Activated CD4-positive, alpha-beta T cell treated with anti-CD3 and anti-CD28 coated beads for 36 hours (primary cell): ENCODE measurements at regions of chr15 and their contacts with region 1.

Region 1: DNA sequence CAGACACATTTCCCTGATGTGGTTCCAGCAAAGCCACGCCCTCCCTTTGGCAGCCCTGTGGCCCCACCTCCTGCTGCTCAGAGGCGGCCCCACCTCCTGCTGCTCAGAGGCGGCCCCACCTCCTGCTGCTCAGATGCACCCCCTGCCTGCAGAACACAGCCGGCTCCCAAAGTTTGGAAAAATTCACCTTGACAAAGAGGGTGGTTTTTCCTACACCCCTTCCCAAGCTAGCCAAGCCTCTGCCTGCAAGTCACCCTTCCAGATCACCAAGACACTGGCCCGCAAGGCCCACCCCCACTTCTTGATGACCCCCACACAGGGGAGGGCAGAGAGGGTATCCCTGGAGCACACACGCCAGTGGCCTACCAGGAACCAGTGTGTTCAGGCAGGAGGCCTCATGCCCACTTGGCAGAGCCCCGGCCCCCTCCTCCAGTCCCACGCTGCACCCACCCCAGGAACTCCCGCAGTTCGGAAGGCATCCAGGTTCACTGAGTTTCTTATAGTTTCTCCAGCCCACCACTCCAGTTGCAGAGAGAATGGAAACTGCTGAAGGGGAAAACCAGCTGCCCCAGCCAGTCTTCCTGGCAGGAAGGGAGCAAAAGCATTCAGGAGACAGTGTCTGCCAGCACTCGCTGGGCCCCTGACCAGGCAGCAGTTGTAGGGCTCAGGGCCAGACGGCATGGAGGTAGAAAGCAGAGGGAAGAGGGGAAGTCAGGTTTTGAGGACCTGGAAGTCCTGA is 2.3 kb upstream of the HAPLN3 start:
- DNase-seq: peak; percentile 86
- ATAC-seq: peak; percentile 80
- H3K4me3 Mint-ChIP-seq: no peak overlapping the region
- H3K27ac Mint-ChIP-seq: no peak overlapping the region
- H3K4me1 Mint-ChIP-seq: peaks cover 35% of the 10 kb centered on the region
- H3K27me3 Mint-ChIP-seq: no peaks in the 10 kb centered on the region

Region 2: GRCh38 chr15:88476635-88477060 is 421.0 kb before region 1 on chr15:
- CTCF ChIA-PET with region 1: no interaction called
- POLR2A ChIA-PET with region 1: no interaction called
- intact Hi-C with region 1: loop called in 1 of 2 experiments (anchors 10 kb)
- DNase-seq: peak; percentile 28
- ATAC-seq: peak; percentile 60
- H3K4me3 Mint-ChIP-seq: no peak overlapping the region
- H3K27ac Mint-ChIP-seq: no peak overlapping the region
- H3K4me1 Mint-ChIP-seq: peaks cover 9% of the 10 kb centered on the region
- H3K27me3 Mint-ChIP-seq: no peaks in the 10 kb centered on the region

Region 3: GRCh38 chr15:88913017-88913849 is 15.6 kb after region 1 on chr15 and contains the start of gene MFGE8:
- CTCF ChIA-PET with region 1: interaction called, 3 read pairs
- POLR2A ChIA-PET with region 1: no interaction called
- intact Hi-C with region 1: loop called (anchors 1 to 2 kb)
- DNase-seq: peak; percentile 83
- ATAC-seq: peak; percentile 95
- H3K4me3 Mint-ChIP-seq: peak within 1 kb of the TSS; percentile 79
- H3K27ac Mint-ChIP-seq: peak within 1 kb of the TSS; percentile 82
- H3K4me1 Mint-ChIP-seq: peaks cover 16% of the 10 kb centered on the region
- H3K27me3 Mint-ChIP-seq: no peaks in the 10 kb centered on the region
- total RNA-seq, gene MFGE8: 17.0 to 18.6 TPM

Region 4: GRCh38 chr15:89129123-89129815 is 231.6 kb after region 1 on chr15:
- CTCF ChIA-PET with region 1: no interaction called
- POLR2A ChIA-PET with region 1: no interaction called
- intact Hi-C with region 1: loop called in 1 of 2 experiments (anchors 5 kb)
- DNase-seq: peak; percentile 75
- ATAC-seq: peak; percentile 25
- H3K4me3 Mint-ChIP-seq: no peak overlapping the region
- H3K27ac Mint-ChIP-seq: no peak overlapping the region
- H3K4me1 Mint-ChIP-seq: peaks cover 28% of the 10 kb centered on the region
- H3K27me3 Mint-ChIP-seq: no peaks in the 10 kb centered on the region

Region 5: DNA sequence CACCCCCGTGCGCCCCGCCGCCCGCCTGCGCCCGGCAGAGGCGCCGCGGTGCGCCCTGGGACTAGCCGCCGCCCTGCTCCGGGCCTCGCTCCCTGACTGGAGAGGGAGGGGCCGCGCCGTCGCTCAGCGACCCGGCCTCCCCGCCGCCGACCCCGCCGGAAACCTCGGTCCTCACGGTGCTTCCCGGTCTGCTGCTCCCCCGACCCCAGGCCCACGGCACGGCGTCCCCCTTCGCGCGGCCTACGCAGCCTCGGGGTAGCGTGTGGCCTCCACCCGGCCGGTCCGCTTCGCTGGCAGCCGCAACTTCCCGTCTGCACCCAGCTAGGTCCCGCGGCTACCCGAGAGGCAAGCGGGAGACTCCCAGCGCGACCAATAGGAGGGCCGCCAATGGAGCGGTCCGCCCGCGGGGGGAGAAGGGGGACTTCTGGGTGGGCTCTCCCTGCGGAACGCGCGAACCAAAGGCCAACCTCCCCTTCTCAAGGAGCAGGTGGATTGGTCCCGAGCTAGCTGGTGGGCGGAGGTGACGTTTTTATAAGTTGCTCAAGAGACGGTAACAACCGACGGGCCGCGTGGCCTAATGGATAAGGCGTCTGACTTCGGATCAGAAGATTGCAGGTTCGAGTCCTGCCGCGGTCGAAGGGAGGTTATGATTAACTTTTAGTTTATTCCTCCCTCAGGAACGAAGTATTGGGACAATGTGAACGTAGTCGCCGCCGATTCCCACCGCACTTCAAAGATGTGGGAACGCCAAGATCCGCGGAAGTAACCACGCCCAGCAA is 437.1 kb after region 1 on chr15 and contains the start of gene POLG:
- CTCF ChIA-PET with region 1: no interaction called
- POLR2A ChIA-PET with region 1: no interaction called
- intact Hi-C with region 1: loop called in 1 of 2 experiments (anchors 10 kb)
- DNase-seq: peak; percentile 99
- ATAC-seq: peak; percentile 92
- H3K4me3 Mint-ChIP-seq: peak within 1 kb of the TSS; percentile 80
- H3K27ac Mint-ChIP-seq: peak within 1 kb of the TSS; percentile 87
- H3K4me1 Mint-ChIP-seq: peaks cover 56% of the 10 kb centered on the region
- H3K27me3 Mint-ChIP-seq: peaks cover 2% of the 10 kb centered on the region
- total RNA-seq, gene POLG: 63.2 to 80.4 TPM